ENCODE measurements at regions of chr3 and their contacts with region 1.

Region 1: GRCh38 chr3:152268555-152269425 is at the start of gene MBNL1:
- DNase-seq: peak; percentile 93
- ATAC-seq: peak; percentile 69
- H3K4me3 Mint-ChIP-seq: peak within 1 kb of the TSS; percentile 79
- H3K27ac Mint-ChIP-seq: peak within 1 kb of the TSS; percentile 99
- H3K4me1 Mint-ChIP-seq: peaks cover 49% of the 10 kb centered on the region
- H3K27me3 Mint-ChIP-seq: no peaks in the 10 kb centered on the region
- total RNA-seq, gene MBNL1: 317 to 481 TPM

Region 2: GRCh38 chr3:152071924-152072323 is 196.9 kb before region 1 on chr3:
- CTCF ChIA-PET with region 1: no interaction called
- POLR2A ChIA-PET with region 1: no interaction called
- intact Hi-C with region 1: loop called in 1 of 2 experiments (anchors 10 kb)
- DNase-seq: peak; percentile 14
- ATAC-seq: peak; percentile 87
- H3K4me3 Mint-ChIP-seq: no peak overlapping the region
- H3K27ac Mint-ChIP-seq: no peak overlapping the region
- H3K4me1 Mint-ChIP-seq: peaks cover 2% of the 10 kb centered on the region
- H3K27me3 Mint-ChIP-seq: no peaks in the 10 kb centered on the region

Region 3: DNA sequence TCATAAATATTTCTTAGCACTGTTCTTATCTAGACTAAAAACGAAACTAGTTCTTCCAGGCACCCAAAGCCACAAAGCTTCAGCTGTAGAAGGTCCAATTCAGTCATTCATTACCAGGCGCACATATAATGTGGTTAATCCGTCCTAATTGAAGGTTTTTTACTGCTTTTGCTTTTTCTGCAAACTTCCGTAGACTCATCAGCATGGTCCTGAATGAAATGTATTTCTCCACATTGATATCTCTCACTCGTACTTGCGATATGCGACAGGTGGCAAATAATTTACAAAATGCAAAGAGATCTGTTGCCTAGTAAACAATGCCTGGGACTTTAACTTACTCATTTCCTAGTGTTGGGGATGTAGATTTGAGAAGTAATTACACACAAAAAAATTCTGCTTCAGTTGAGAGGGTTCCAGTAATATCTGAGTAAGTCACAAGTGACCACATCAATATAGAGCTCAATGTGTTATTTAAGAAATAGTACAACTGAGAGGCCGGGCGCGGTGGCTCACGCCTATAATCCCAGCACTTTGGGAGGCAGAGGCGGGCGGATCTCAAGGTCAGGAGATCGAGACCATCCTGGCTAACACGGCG is 75.0 kb before region 1 on chr3:
- CTCF ChIA-PET with region 1: no interaction called
- POLR2A ChIA-PET with region 1: interaction called, 9 read pairs
- intact Hi-C with region 1: loop called (anchors 1 to 2 kb)
- DNase-seq: peak; percentile 46
- ATAC-seq: peak; percentile 49
- H3K4me3 Mint-ChIP-seq: peak overlapping the region; percentile 66
- H3K27ac Mint-ChIP-seq: peak overlapping the region; percentile 74
- H3K4me1 Mint-ChIP-seq: peaks cover 83% of the 10 kb centered on the region
- H3K27me3 Mint-ChIP-seq: no peaks in the 10 kb centered on the region

Region 4: DNA sequence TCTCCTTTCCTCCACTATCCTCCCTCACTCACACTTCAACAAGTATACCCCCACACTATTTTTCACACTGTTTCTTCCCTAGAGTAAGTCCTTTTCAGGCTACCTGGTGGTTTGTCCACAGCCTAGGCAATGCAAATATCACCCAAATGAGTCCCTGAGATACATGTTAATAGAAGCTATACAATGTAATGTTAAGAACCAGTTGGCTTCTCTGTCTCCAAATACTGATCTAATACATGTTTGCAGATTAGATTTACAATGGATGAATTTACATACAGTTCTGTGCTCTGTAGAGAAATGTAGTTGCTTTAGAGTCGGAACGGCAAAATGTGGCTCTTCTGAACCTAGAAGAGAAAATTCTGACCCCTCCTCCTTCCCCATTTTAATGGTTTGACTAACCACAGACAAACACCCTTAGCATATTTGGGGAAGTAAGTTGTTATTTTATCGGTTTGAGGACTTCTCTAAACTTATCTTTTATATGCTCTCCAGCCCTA is 63.6 kb before region 1 on chr3:
- CTCF ChIA-PET with region 1: interaction called, 3 read pairs
- POLR2A ChIA-PET with region 1: interaction called, 11 read pairs
- intact Hi-C with region 1: no loop called
- DNase-seq: no peak
- ATAC-seq: no peak
- H3K4me3 Mint-ChIP-seq: peak overlapping the region; percentile 70
- H3K27ac Mint-ChIP-seq: peak overlapping the region; percentile 92
- H3K4me1 Mint-ChIP-seq: peaks cover 65% of the 10 kb centered on the region
- H3K27me3 Mint-ChIP-seq: no peaks in the 10 kb centered on the region

Region 5: GRCh38 chr3:152258448-152259393 is 10.1 kb before region 1 on chr3:
- CTCF ChIA-PET with region 1: interaction called, 16 read pairs
- POLR2A ChIA-PET with region 1: interaction called, 11 read pairs
- intact Hi-C with region 1: loop called (anchors 1 kb)
- DNase-seq: peak; percentile 82
- ATAC-seq: peak; percentile 81
- H3K4me3 Mint-ChIP-seq: peak overlapping the region; percentile 61
- H3K27ac Mint-ChIP-seq: peak overlapping the region; percentile 91
- H3K4me1 Mint-ChIP-seq: peaks cover 90% of the 10 kb centered on the region
- H3K27me3 Mint-ChIP-seq: no peaks in the 10 kb centered on the region

Region 6: DNA sequence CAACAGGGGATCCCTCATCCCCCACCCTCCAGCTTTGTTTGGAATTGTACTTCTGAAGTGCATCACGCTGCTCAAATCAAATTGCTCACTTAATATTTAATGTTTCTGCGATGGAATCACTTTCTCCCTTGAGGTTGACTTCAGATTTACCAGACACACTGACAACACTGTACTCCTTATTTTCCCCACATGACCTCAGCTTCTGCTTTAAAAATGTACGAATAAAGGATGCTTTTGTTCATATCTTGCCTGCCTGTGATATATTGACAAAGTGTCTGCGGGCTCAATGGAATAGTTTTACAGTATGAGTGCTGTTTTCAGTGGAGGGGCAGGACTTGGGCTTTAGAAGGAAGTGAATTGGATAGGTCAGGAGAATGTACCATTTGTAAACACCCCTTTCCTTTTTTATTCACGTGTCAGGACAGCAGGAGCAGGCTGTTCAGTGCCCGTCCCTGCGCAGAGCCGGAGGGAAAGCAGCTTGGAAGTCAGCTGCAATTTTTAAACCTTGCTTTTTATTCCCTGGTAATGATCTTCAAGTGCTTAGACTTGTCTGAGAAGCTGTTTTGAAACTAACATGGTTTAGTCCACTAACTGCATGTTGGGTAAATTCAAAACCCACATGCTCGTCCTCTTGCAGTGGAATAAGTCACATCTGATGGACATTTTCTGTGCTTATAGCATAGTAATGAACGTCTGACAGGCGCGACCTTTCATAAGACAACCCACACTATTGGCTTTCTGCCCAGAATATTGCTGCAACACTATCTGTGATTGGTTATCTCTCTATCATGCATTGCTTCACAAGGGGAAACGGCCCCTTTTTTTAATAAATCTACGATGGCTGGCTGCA is 29.8 kb after region 1 on chr3:
- CTCF ChIA-PET with region 1: interaction called, 4 read pairs
- POLR2A ChIA-PET with region 1: interaction called, 3 read pairs
- intact Hi-C with region 1: loop called (anchors 1 to 2 kb)
- DNase-seq: peak; percentile 70
- ATAC-seq: peak; percentile 87
- H3K4me3 Mint-ChIP-seq: peak overlapping the region; percentile 69
- H3K27ac Mint-ChIP-seq: peak overlapping the region; percentile 79
- H3K4me1 Mint-ChIP-seq: peaks cover 75% of the 10 kb centered on the region
- H3K27me3 Mint-ChIP-seq: no peaks in the 10 kb centered on the region